ENCODE measurements at regions of chr7 and their contacts with region 1.

Region 1: DNA sequence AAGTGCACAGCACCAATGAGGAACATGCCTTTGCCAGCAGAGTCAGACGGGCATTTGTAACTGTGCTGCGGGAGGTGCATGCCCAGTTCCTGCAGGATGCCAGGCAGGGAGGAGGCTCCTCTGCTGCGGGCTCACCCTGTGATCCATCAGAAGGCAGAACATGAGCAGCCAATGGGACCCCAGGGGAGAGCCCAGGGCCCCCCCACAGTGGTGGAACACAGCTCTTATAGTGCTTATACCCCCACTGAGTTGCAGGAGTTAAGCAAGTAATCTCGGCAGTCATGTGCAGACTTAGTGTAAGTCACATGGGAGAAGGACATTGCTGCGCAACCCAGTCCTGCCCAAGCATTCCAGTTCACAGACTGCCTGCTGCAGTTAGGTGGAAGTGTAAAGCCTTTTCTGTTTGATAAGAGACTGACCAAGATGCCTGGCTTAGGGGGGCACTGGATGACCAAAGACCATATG is 120.3 kb upstream of the TMEM106B start:
- DNase-seq: no peak
- H3K4me3 Mint-ChIP-seq: no peak overlapping the region
- H3K27ac Mint-ChIP-seq: no peak overlapping the region
- H3K4me1 Mint-ChIP-seq: peaks cover 8% of the 10 kb centered on the region
- H3K27me3 Mint-ChIP-seq: no peaks in the 10 kb centered on the region
- CTCF ChIP-seq: no peak

Region 2: DNA sequence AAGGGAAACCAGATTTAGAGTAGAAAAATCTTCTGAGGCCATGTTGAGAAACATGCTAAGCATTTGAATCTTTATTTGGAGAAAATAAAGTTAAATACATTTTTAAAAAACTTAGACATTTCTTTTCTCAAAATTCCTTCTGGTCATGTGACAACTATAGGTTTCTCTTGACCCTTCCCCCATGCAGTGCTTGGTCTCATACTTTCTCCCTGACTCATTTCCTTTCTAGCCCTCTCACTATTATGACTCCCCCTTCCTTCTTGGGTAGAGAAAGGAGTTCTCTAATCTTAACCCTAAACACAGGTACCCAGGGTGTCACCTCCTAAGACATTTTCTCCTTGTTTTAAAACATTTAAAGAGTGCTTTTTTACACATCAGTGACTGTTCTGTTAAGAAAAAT is 59.2 kb before region 1 on chr7:
- CTCF ChIA-PET with region 1: no interaction called
- intact Hi-C with region 1: no loop called
- DNase-seq: peak; percentile 74
- H3K4me3 Mint-ChIP-seq: peak overlapping the region; percentile 31
- H3K27ac Mint-ChIP-seq: peak overlapping the region; percentile 98
- H3K4me1 Mint-ChIP-seq: peaks cover 46% of the 10 kb centered on the region
- H3K27me3 Mint-ChIP-seq: no peaks in the 10 kb centered on the region
- CTCF ChIP-seq: no peak

Region 3: DNA sequence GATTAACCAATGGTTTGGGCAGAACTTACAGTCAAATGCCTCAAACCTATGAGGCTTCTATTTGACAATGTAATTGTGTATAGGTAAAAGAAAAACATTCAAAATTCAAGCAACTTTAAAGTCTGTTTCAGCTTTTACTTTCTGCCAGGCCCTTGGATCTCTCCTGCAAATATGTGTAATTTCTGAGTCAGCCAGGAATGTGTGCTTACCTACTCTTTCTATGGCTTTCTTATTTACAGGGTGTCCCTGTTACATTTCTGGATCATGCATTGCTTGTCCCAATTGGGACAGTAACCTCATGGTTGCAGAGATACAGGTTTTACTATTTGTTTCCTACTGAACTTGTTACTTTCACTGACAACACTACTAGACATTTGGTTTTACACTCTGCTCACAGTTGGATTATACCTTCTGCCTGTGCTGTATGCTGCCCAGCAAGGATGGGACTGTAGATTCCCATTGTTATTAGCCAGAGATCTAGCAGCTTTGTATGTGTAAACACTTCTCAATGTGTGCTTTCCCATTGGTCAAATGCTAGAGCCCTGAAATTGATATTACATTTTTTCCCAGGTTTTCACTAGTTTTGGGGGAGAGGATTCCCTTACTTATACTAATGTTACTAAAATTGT is 951.9 kb after region 1 on chr7:
- CTCF ChIA-PET with region 1: no interaction called
- intact Hi-C with region 1: loop called (anchors 5 kb)
- DNase-seq: no peak
- H3K4me3 Mint-ChIP-seq: no peak overlapping the region
- H3K27ac Mint-ChIP-seq: no peak overlapping the region
- H3K4me1 Mint-ChIP-seq: peaks cover 18% of the 10 kb centered on the region
- H3K27me3 Mint-ChIP-seq: no peaks in the 10 kb centered on the region
- CTCF ChIP-seq: no peak

Measured in Calu3 (cell line).